SK-N-SH (cell line): ENCODE measurements at regions of chr7 and their contacts with region 1.

Region 1: GRCh38 chr7:101244375-101245146 is at the start of gene FIS1:
- DNase-seq: peak; percentile 98
- H3K4me3 ChIP-seq: peak within 1 kb of the TSS; percentile 77 to 89
- H3K27ac ChIP-seq: peak within 1 kb of the TSS; percentile 80 to 93
- H3K4me1 ChIP-seq: peaks cover 7 to 14% of the 10 kb centered on the region in 2 experiments; a peak in 1 of 4 replicates
- H3K27me3 ChIP-seq: no peaks in the 10 kb centered on the region
- CTCF ChIP-seq: peak; percentile 98
- EP300 ChIP-seq: no peak
- RAD21 ChIP-seq: no peak; the same call in 1 of the 2 replicates
- polyA plus RNA-seq, gene FIS1: 1,071 and 1,313 TPM in 2 replicates

Region 2: DNA sequence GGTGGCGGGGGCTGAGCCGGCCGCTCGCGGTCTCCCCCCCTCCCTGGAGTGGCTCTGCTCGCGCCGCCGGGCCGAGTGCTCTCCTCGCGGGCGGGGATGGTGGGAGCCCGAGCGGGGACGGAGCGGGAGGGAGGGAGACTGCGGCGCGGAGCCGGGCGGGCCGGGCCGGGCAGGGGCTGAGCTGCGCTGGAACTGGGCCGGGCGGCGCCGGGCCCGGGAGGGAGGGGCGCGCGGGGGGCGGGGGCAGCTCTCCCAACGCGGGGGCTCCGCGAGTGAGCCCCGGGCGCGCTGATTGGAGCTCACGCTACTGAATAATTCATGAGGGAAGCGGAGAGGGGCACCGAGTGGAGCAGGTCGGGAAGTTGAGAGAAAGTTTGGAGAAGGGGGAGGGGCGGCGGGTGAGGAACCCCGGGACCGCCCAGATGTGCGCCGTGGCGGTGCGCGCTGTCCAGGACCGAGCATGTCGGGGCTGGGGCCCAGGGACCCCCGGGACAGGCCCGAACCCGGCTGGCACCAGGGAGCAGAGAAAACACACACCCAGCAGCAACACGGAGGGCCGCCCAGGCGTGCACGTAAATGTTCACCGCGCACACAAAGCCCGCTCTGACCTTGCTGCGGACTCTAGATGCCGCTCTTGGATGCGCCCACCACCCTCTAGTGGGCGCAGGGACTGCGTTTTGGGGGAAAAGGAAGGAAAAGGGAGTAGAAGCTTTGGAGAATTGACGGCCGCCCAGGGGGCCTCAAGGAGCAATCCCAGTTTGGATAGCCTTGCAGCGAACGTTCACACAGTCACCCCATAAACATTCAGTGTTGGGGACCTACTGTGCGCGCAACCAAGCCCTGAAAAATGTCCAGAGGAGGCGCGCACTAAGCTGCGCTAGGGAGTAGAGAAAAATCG is 417.0 kb before region 1 on chr7 and contains the start of gene EPHB4:
- CTCF ChIA-PET with region 1: no interaction called
- POLR2A ChIA-PET with region 1: no interaction called
- DNase-seq: peak; percentile 88
- H3K4me3 ChIP-seq: peak within 1 kb of the TSS; percentile 65 to 78
- H3K27ac ChIP-seq: peak within 1 kb of the TSS; percentile 17 to 35
- H3K4me1 ChIP-seq: peaks cover 6 to 22% of the 10 kb centered on the region in 2 experiments; a peak in 2 of 4 replicates
- H3K27me3 ChIP-seq: no peaks in the 10 kb centered on the region
- CTCF ChIP-seq: peak; percentile 76
- EP300 ChIP-seq: no peak
- RAD21 ChIP-seq: peak; percentile 55
- polyA plus RNA-seq, gene EPHB4: 51.1 and 64.4 TPM in 2 replicates

Region 3: GRCh38 chr7:101195884-101196283 is 48.7 kb before region 1 on chr7:
- CTCF ChIA-PET with region 1: interaction called, 41 read pairs
- POLR2A ChIA-PET with region 1: interaction called, 5 read pairs
- DNase-seq: no peak
- H3K4me3 ChIP-seq: no peak overlapping the region
- H3K27ac ChIP-seq: no peak overlapping the region
- H3K4me1 ChIP-seq: no peaks in the 10 kb centered on the region
- H3K27me3 ChIP-seq: no peaks in the 10 kb centered on the region; the same call in 1 of the 2 replicates
- CTCF ChIP-seq: no peak
- EP300 ChIP-seq: no peak
- RAD21 ChIP-seq: no peak

Region 4: DNA sequence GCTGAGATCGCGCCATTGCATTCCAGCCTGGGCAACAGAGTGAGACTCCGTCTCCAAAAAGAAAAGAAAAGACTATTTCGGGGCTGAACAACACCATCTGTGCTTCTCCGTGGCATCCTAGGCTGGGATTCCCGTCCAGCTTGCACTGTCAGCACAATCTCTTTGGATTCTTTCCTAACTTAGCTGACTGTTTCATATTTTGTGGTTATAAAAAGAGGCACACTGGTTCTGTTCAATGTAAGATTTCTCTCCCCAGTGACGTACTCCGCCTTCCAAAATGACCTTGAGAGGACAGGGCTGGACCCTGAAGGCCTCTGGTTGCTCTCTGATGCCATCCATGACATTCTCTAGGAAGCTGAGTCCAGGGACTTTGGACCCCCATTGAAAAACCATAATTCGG is 17.8 kb before region 1 on chr7:
- CTCF ChIA-PET with region 1: interaction called, 29 read pairs
- POLR2A ChIA-PET with region 1: no interaction called
- DNase-seq: no peak
- H3K4me3 ChIP-seq: no peak overlapping the region
- H3K27ac ChIP-seq: no peak overlapping the region
- H3K4me1 ChIP-seq: peaks cover 0 to 4% of the 10 kb centered on the region in 2 experiments; a peak in 1 of 4 replicates
- H3K27me3 ChIP-seq: no peaks in the 10 kb centered on the region
- CTCF ChIP-seq: no peak
- EP300 ChIP-seq: no peak
- RAD21 ChIP-seq: no peak